Activated naive CD4-positive, alpha-beta T cell treated with anti-CD3 and anti-CD28 coated beads, Interleukin-2, amount 10 ng/mL, durations not matched to agents 7 days and 5 days (primary cell): ENCODE measurements at regions of chr2 and their contacts with region 1.

Region 1: DNA sequence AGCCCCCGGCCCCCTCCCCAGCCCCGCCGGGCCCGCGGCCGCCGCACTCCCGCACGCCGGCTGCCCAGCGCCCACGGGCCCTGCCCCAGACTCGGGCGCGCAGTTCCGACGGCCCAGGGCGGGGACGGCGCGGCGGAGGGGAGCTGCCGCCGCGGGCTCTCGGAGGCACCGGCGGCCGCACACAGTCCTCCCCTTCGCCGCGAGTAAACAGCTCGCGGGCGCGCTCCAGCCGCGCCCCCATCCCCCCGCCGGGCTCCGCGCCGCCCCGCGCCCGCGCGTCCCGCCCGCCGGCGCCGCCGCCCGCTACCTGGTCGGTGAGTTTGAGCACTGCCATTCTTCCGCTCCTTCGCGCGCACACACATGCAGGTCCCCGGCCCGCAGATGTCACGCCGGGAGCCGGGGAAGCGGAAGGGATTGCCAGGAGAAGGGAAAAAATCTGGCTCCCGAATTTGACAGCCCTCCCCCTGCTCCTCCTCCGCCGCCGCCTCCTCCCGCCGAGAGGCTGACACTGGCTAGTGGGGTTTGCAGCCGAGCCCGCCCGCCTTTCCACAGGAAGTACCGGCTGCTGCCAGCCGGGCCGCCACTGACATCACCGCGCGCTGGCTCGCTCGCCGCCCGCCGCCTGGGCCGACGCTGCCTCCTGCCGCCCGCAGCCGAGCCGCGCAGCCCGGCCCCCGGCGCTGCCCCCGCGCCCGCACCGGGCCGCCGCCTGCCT is at the start of gene ANKRD44:
- DNase-seq: peak; percentile 91
- H3K4me3 Mint-ChIP-seq: peak within 1 kb of the TSS; percentile 95
- H3K27ac Mint-ChIP-seq: peak within 1 kb of the TSS; percentile 93
- H3K4me1 Mint-ChIP-seq: peaks cover 57% of the 10 kb centered on the region
- H3K27me3 Mint-ChIP-seq: no peaks in the 10 kb centered on the region

Region 2: DNA sequence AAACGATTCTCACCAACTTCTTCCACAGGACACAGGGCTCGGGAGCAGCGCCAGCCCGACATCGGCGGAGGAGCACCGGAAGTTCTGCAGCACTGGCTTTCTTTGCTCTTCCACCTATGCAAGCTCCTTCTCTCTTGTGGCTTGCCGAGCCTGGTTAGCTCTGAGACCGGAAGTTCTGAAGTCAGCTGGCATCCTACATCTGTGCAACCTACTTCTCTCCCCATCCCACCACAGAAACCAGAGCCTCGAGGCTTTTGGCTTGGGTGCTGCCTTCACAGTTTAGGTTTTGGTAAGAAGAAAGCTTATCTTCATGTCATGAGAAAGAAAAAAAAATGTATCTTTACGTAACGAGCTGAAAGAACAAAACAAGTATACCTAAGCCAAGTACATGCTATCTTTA is 111.5 kb before region 1 on chr2:
- CTCF ChIA-PET with region 1: interaction called, 11 read pairs
- DNase-seq: peak; percentile 95
- H3K4me3 Mint-ChIP-seq: peak overlapping the region; percentile 81
- H3K27ac Mint-ChIP-seq: peak overlapping the region; percentile 96
- H3K4me1 Mint-ChIP-seq: peaks cover 95% of the 10 kb centered on the region
- H3K27me3 Mint-ChIP-seq: no peaks in the 10 kb centered on the region

Region 3: DNA sequence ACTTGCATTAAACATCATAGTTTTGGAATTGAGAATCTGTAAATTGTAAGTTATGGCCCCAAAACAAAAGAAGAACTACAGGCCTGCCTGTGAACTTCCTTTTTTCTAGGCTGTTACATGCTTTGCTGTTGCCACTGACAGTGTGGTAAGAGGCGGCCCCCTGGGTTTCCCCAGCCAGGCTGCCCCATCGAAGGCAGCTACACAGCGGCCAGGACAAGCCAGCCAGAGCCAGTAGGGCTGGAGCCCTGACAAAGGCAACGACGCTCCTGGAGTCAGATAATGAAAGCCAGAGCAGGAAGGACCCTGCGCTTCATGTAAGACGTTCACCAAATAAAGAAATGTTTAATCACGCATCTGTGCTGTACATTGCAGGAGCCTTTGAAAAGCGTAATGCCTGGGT is 54.9 kb before region 1 on chr2:
- CTCF ChIA-PET with region 1: interaction called, 10 read pairs
- DNase-seq: peak; percentile 81
- H3K4me3 Mint-ChIP-seq: peak overlapping the region; percentile 74
- H3K27ac Mint-ChIP-seq: peak overlapping the region; percentile 95
- H3K4me1 Mint-ChIP-seq: peaks cover 72% of the 10 kb centered on the region
- H3K27me3 Mint-ChIP-seq: no peaks in the 10 kb centered on the region

Region 4: GRCh38 chr2:197293252-197294007 is 17.0 kb before region 1 on chr2:
- CTCF ChIA-PET with region 1: interaction called, 49 read pairs
- DNase-seq: no peak
- H3K4me3 Mint-ChIP-seq: peak overlapping the region; percentile 52
- H3K27ac Mint-ChIP-seq: peak overlapping the region; percentile 88
- H3K4me1 Mint-ChIP-seq: peaks cover 88% of the 10 kb centered on the region
- H3K27me3 Mint-ChIP-seq: no peaks in the 10 kb centered on the region

Region 5: GRCh38 chr2:197388866-197389587 is 78.6 kb after region 1 on chr2:
- CTCF ChIA-PET with region 1: no interaction called
- DNase-seq: no peak
- H3K4me3 Mint-ChIP-seq: no peak overlapping the region
- H3K27ac Mint-ChIP-seq: no peak overlapping the region
- H3K4me1 Mint-ChIP-seq: peaks cover 3% of the 10 kb centered on the region
- H3K27me3 Mint-ChIP-seq: peaks cover 4% of the 10 kb centered on the region